CD8-positive, alpha-beta T cell (primary cell): ENCODE measurements at regions of chr19 and their contacts with region 1.

Region 1: DNA sequence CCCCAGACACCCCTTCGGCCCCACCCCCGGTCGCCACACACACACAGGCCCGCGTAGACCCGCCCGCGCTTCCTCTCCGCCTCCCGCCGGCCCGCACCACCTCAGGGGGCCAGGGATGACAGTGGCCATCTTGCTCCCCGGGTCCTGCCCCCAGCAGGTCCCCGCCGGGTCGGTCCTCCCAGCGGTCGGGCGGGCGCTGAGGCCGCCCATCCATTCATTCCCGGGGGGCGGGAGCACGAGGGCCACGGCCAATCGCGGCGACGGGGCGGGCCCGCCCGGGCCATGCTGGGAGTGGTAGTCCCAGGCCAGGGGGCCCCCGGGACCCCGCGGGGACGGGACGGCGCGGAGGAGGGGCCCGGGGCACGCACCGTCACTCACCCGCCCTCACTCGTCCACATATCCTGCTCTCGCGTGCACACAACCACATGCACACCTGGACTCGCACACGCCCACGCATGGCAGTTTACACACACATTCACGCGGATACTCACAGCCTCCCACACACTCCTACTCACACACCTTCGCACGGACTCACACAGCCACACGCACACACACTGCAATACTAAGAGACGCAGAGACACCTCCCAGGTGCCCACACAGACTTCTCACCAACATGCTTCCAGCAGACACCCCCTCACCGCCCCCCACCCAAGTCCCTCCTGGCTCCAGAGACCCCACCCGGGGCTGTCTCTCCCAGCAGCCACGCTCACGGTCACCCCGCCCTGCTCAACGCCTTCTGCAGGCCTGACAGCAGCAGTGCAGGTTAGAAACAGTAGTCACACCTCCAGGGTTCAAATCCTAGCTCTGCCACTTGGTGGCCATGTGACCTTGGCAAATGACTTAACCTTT is at the start of gene DPF1:
- DNase-seq: peak in 5 of 9 experiments; percentile 29 to 60 (median 41)
- ATAC-seq: peak; percentile 75
- H3K4me3 ChIP-seq: peak within 1 kb of the TSS; percentile 3 to 12
- H3K4me3 Mint-ChIP-seq: peak within 1 kb of the TSS; percentile 80
- H3K27ac ChIP-seq: no peak within 1 kb of the TSS
- H3K27ac Mint-ChIP-seq: no peak within 1 kb of the TSS
- H3K4me1 ChIP-seq: peaks cover 19% of the 10 kb centered on the region
- H3K4me1 Mint-ChIP-seq: peaks cover 26% of the 10 kb centered on the region
- H3K27me3 ChIP-seq: peaks cover 35 to 61% of the 10 kb centered on the region in 2 experiments
- H3K27me3 Mint-ChIP-seq: peaks cover 55% of the 10 kb centered on the region
- CTCF ChIP-seq: peak; percentile 27
- total RNA-seq, gene DPF1: not detected

Region 2: DNA sequence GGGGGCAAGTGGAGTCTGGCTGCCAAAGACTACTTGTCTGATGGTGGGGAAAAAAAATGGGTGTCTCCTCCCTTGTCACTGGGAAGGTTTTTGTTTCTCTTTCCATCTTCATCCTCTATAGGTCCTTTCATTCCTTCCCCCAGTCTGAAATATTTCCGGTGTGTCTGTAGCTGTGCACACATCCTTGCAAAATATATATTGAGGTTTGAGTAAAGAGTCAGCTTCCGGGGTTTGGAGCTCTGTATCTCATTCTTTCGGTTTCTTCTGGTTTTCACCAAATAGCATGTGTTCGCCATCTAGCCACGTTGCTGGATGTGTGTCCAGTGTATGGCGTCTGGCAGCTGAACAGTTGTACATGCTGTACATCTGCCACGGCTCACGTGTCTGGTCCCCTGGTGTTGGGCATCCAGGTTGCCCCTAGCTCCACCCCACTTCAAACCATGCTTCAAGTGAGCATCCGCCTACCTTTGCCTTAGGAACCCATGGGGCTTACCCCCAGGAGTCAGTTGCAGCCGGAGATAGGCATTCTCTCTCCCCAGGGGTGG is 175.1 kb before region 1 on chr19:
- CTCF ChIA-PET with region 1: interaction called, 3 read pairs
- POLR2A ChIA-PET with region 1: no interaction called
- intact Hi-C with region 1: loop called in 1 of 2 experiments (anchors 10 kb)
- DNase-seq: peak in 8 of 9 experiments; percentile 31 to 89 (median 61)
- ATAC-seq: peak; percentile 86
- H3K4me3 ChIP-seq: peak overlapping the region; percentile 29
- H3K4me3 Mint-ChIP-seq: peak overlapping the region; percentile 74
- H3K27ac ChIP-seq: peak overlapping the region; percentile 69 to 90
- H3K27ac Mint-ChIP-seq: peak overlapping the region; percentile 98
- H3K4me1 ChIP-seq: peaks cover 31% of the 10 kb centered on the region
- H3K4me1 Mint-ChIP-seq: peaks cover 53% of the 10 kb centered on the region
- H3K27me3 ChIP-seq: no peaks in the 10 kb centered on the region
- H3K27me3 Mint-ChIP-seq: no peaks in the 10 kb centered on the region
- CTCF ChIP-seq: no peak